ENCODE measurements at regions of chr5 and their contacts with region 1.

Region 1: DNA sequence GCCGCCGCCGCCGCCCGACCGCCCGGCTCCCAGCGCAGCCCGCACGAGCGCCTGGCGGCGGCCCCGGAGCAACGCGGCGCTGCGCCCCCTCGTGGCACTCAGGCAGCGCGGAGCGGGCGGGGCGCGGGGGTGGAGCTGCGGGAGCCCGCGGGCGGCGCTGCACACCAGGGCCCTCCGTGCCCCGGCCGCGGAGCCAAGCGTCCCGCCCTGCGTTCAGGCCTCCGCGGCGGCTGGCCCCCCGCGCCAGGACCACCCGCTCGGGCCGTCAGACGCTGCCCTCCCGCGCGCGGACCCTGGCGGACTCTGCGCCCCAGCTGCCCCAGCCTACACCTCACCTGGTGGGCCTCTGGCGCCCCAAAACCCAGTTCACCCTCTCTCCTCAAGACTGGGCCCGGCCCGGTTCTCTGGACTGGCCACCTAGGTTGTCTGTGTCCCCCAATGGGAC is at the start of gene RASGEF1C:
- DNase-seq: peak; percentile 71
- ATAC-seq: peak; percentile 82
- H3K4me3 Mint-ChIP-seq: peak within 1 kb of the TSS; percentile 72
- H3K27ac Mint-ChIP-seq: no peak within 1 kb of the TSS
- H3K4me1 Mint-ChIP-seq: peaks cover 10% of the 10 kb centered on the region
- H3K27me3 Mint-ChIP-seq: peaks cover 35% of the 10 kb centered on the region
- CTCF ChIP-seq: 0 out of 2 replicates have a peak, but pooled peaks have one; percentile 13
- total RNA-seq, gene RASGEF1C: 0.44 to 0.96 TPM (median 0.82 TPM) in 3 replicates

Region 2: DNA sequence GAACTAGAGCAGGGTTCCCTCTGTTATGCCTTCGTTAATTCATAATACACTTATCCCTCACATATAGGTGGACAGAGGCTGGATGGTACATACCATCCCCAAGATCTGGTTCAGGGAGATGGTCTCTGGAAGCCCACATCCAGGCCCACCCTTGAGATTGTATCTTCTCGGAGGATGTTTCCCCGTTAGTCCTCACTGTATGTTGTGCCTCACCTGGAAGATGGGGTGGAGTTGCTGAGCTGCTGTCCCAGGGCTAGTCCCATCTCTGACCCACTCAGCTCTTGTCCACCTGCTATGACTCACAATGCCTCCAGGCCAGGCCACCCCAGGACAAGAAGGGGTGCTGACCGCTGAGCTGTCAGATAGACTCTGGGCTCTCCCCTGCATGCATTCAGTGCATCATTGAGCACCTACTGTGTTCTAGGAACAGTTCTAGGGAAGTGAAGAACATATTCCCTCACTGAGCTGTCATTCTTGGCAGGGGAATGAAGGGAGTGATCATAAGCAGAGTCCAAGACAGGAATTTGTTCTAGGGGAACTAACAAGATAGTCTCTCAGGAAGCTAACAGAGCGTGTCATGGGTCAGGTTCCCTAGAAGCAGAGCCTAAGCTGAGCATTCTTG is 528.3 kb before region 1 on chr5 and contains the start of gene CBY3:
- CTCF ChIA-PET with region 1: no interaction called
- POLR2A ChIA-PET with region 1: no interaction called
- DNase-seq: no peak
- ATAC-seq: no peak
- H3K4me3 Mint-ChIP-seq: peak within 1 kb of the TSS; percentile 20; the same call in 1 of the 2 replicates
- H3K27ac Mint-ChIP-seq: peak within 1 kb of the TSS; percentile 25; the same call in 1 of the 2 replicates
- H3K4me1 Mint-ChIP-seq: peaks cover 13% of the 10 kb centered on the region
- H3K27me3 Mint-ChIP-seq: peaks cover 15% of the 10 kb centered on the region
- CTCF ChIP-seq: no peak
- total RNA-seq, gene CBY3: 0.25 to 0.37 TPM (median 0.25 TPM) in 3 replicates

Region 3: DNA sequence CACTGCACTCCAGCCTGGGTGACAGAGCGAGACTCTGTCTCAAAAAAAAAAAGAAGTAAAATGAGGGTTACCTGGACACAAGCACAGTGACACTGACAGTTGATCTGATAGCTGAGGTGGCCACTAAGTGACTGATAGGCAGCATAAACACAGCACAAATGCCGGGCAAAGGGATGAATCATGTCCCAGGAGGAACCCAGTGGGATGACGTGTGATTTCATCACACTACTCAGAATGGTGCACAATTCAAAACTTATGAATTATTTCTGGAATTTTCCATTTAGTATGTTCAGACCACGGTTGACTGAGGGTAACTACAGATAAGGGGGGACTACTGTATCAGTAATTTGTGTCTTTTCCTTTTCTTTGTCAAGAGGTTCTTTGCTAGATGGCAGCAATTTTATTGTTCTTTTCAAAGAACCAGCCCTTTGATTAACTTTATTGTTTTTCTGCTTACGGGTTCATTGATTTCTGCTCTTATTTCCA is 103.3 kb before region 1 on chr5:
- CTCF ChIA-PET with region 1: no interaction called
- POLR2A ChIA-PET with region 1: no interaction called
- DNase-seq: no peak
- ATAC-seq: no peak
- H3K4me3 Mint-ChIP-seq: no peak overlapping the region
- H3K27ac Mint-ChIP-seq: no peak overlapping the region
- H3K4me1 Mint-ChIP-seq: no peaks in the 10 kb centered on the region
- H3K27me3 Mint-ChIP-seq: peaks cover 9% of the 10 kb centered on the region
- CTCF ChIP-seq: no peak

Region 4: DNA sequence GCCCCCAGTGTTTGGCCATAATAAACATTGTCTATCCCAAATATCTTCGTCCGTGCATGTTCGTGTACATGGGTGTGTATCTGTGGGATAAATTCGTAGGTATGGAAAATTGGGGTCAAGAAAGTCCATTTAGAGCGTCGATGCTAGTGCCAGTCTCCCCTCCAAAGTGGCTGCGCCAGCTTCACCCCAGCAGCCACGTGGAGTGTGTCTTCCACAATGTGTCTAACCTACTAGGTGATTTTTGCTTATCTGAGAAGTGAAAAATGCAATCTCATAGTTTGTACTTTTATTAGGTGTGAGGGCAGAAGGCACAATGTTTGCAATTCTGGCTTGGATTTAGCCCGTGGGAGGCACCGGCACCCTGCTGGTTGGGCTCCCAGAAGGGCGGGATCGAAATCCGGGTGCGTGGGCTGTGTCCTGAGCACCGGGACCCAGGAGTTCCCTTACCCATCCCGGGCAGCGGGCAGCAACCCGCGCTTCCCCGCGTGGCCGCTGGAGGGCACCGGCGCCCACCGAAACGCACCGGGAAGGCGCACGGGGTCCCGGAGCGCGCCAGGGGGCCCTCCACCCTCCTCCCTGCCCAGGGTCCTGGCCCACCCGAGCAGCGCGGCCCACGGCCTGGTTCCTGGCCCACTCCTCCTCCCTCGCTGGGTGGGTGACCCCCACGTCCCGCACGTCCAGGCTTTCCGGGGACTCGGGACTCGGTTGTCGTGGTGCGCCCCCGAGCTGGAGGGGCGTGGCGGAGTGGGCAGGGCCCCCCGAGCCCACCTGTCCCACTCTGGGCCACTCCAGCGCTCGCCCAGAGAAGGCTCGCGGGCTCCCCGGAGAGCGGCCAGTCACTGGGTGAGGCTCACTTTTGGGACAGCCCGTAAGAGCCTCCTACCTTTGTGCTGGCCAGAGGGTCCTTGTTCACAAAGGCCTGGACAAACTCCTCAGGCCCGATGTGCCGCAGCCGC is 82.2 kb before region 1 on chr5:
- CTCF ChIA-PET with region 1: interaction called, 14 read pairs
- POLR2A ChIA-PET with region 1: no interaction called
- DNase-seq: peak; percentile 69
- ATAC-seq: peak; percentile 77
- H3K4me3 Mint-ChIP-seq: no peak overlapping the region
- H3K27ac Mint-ChIP-seq: no peak overlapping the region
- H3K4me1 Mint-ChIP-seq: peaks cover 6% of the 10 kb centered on the region
- H3K27me3 Mint-ChIP-seq: peaks cover 3% of the 10 kb centered on the region; the same call in 1 of the 2 replicates
- CTCF ChIP-seq: peak; percentile 87

Region 5: GRCh38 chr5:180161420-180162303 is 47.5 kb before region 1 on chr5:
- CTCF ChIA-PET with region 1: interaction called, 15 read pairs
- POLR2A ChIA-PET with region 1: no interaction called
- DNase-seq: no peak
- ATAC-seq: peak; percentile 69
- H3K4me3 Mint-ChIP-seq: no peak overlapping the region
- H3K27ac Mint-ChIP-seq: no peak overlapping the region
- H3K4me1 Mint-ChIP-seq: no peaks in the 10 kb centered on the region
- H3K27me3 Mint-ChIP-seq: no peaks in the 10 kb centered on the region; the same call in 1 of the 2 replicates
- CTCF ChIP-seq: no peak

Measured in WTC11 (cell line).